ENCODE measurements at regions of chr17 and their contacts with region 1.

Region 1: GRCh38 chr17:48047741-48048383 is at the start of gene NFE2L1:
- DNase-seq: peak; percentile 93 to 100 (median 98)
- ATAC-seq: peak; percentile 95 to 97 (median 96)
- H3K4me3 ChIP-seq: peak within 1 kb of the TSS; percentile 86 to 88
- H3K4me3 Mint-ChIP-seq: peak within 1 kb of the TSS; percentile 76 to 97 (median 90)
- H3K27ac ChIP-seq: peak within 1 kb of the TSS; percentile 92
- H3K27ac Mint-ChIP-seq: peak within 1 kb of the TSS; percentile 99
- H3K4me1 ChIP-seq: peaks cover 17 to 56% of the 10 kb centered on the region in 2 experiments
- H3K4me1 Mint-ChIP-seq: peaks cover 56 to 62% (median 58%) of the 10 kb centered on the region in 3 donors
- H3K27me3 ChIP-seq: no peaks in the 10 kb centered on the region
- H3K27me3 Mint-ChIP-seq: no peaks in the 10 kb centered on the region
- total RNA-seq, gene NFE2L1: 30.3 to 61.6 (median 43.9) TPM

Region 2: GRCh38 chr17:48024937-48025906 is 22.6 kb before region 1 on chr17:
- CTCF ChIA-PET with region 1: interaction called, 3 to 10 read pairs
- POLR2A ChIA-PET with region 1: no interaction called
- DNase-seq: peak; percentile 92 to 99 (median 97)
- ATAC-seq: peak; percentile 90 to 95 (median 92)
- H3K4me3 ChIP-seq: peak overlapping the region; percentile 49 to 84
- H3K4me3 Mint-ChIP-seq: peak overlapping the region; percentile 79 to 90 (median 86)
- H3K27ac ChIP-seq: no peak overlapping the region
- H3K27ac Mint-ChIP-seq: peak overlapping the region; percentile 81 to 90
- H3K4me1 ChIP-seq: peaks cover 20 to 36% of the 10 kb centered on the region in 2 experiments
- H3K4me1 Mint-ChIP-seq: peaks cover 28 to 35% (median 32%) of the 10 kb centered on the region in 3 donors
- H3K27me3 ChIP-seq: peaks cover 0 to 68% of the 10 kb centered on the region in 2 experiments
- H3K27me3 Mint-ChIP-seq: peaks cover 31 to 34% of the 10 kb centered on the region in 2 donors

Region 3: DNA sequence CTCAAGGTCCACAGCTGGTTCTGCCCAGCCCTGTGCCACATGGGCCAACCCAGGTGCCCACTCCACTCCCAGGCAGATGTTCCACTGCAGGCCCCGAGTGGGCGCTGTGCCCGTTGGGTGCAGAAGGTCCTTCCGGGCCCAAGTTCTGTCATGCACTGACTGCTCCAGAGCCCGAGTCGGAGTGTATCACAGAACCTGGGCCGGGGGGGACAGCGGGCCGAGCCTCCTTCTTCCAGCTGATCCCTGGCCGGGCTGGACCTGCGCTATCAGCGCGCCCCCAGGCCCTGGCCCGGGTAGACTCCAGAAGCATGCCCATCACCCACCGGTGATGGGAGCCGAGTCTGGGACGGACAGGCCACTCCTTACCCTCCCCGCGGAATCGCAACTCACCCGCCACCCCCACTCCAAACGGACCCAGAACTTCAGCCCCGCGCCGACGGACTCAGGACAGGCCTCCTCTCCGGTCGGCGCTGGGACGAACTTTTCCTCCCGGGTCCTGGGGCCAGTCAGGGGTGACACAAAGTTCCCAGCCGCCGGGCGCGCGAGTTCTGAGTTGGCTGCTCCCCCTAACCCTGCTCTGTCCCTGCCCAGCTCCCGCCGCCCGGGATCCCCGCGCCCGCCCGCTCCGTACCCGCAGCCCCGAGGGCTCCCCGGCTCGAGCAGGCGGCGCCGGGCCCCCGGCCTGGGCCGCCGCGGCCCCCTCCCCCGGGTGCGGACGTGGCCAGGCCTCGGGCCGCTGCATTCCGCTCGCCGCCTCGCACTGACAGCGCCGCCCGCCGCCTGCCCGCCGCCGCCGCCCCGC is 10.6 kb before region 1 on chr17 and contains the start of gene COPZ2:
- CTCF ChIA-PET with region 1: interaction called in 1 of 2 experiments, 13 read pairs
- POLR2A ChIA-PET with region 1: interaction called in 1 of 2 experiments, 3 read pairs
- DNase-seq: peak in 34 of 35 experiments; percentile 32 to 78 (median 61)
- ATAC-seq: peak; percentile 93 to 96 (median 96)
- H3K4me3 ChIP-seq: peak within 1 kb of the TSS; percentile 75 to 78
- H3K4me3 Mint-ChIP-seq: peak within 1 kb of the TSS; percentile 78 to 86 (median 81)
- H3K27ac ChIP-seq: no peak within 1 kb of the TSS
- H3K27ac Mint-ChIP-seq: no peak within 1 kb of the TSS
- H3K4me1 ChIP-seq: peaks cover 2 to 16% of the 10 kb centered on the region in 2 experiments
- H3K4me1 Mint-ChIP-seq: peaks cover 5 to 7% (median 6%) of the 10 kb centered on the region in 3 donors
- H3K27me3 ChIP-seq: peaks cover 0 to 60% of the 10 kb centered on the region in 2 experiments
- H3K27me3 Mint-ChIP-seq: peaks cover 18 to 32% of the 10 kb centered on the region in 2 donors
- total RNA-seq, gene COPZ2: 1.2 to 2.6 (median 1.9) TPM

Region 4: DNA sequence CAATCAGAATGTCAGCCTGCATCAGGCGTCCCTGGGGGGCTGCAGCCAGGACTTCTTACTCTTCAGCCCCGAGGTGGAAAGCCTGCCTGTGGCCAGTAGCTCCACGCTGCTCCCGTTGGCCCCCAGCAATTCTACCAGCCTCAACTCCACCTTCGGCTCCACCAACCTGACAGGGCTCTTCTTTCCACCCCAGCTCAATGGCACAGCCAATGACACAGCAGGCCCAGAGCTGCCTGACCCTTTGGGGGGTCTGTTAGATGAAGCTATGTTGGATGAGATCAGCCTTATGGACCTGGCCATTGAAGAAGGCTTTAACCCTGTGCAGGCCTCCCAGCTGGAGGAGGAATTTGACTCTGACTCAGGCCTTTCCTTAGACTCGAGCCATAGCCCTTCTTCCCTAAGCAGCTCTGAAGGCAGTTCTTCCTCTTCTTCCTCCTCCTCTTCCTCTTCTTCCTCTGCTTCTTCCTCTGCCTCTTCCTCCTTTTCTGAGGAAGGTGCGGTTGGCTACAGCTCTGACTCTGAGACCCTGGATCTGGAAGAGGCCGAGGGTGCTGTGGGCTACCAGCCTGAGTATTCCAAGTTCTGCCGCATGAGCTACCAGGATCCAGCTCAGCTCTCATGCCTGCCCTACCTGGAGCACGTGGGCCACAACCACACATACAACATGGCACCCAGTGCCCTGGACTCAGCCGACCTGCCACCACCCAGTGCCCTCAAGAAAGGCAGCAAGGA is 10.7 kb after region 1 on chr17:
- CTCF ChIA-PET with region 1: no interaction called
- POLR2A ChIA-PET with region 1: no interaction called
- DNase-seq: no peak
- ATAC-seq: no peak
- H3K4me3 ChIP-seq: no peak overlapping the region
- H3K4me3 Mint-ChIP-seq: no peak overlapping the region
- H3K27ac ChIP-seq: no peak overlapping the region
- H3K27ac Mint-ChIP-seq: no peak overlapping the region
- H3K4me1 ChIP-seq: peaks cover 0 to 14% of the 10 kb centered on the region in 2 experiments
- H3K4me1 Mint-ChIP-seq: peaks cover 16 to 25% (median 18%) of the 10 kb centered on the region in 3 donors
- H3K27me3 ChIP-seq: no peaks in the 10 kb centered on the region
- H3K27me3 Mint-ChIP-seq: no peaks in the 10 kb centered on the region

Region 5: GRCh38 chr17:48074315-48075081 is 26.6 kb after region 1 on chr17:
- CTCF ChIA-PET with region 1: interaction called, 3 to 9 read pairs
- POLR2A ChIA-PET with region 1: interaction called in 1 of 2 experiments, 11 read pairs
- DNase-seq: peak; percentile 32 to 84 (median 68)
- ATAC-seq: peak; percentile 71 to 81 (median 76)
- H3K4me3 ChIP-seq: no peak overlapping the region
- H3K4me3 Mint-ChIP-seq: no peak overlapping the region
- H3K27ac ChIP-seq: no peak overlapping the region
- H3K27ac Mint-ChIP-seq: no peak overlapping the region
- H3K4me1 ChIP-seq: no peaks in the 10 kb centered on the region
- H3K4me1 Mint-ChIP-seq: no peaks in the 10 kb centered on the region
- H3K27me3 ChIP-seq: no peaks in the 10 kb centered on the region
- H3K27me3 Mint-ChIP-seq: no peaks in the 10 kb centered on the region

Region 6: DNA sequence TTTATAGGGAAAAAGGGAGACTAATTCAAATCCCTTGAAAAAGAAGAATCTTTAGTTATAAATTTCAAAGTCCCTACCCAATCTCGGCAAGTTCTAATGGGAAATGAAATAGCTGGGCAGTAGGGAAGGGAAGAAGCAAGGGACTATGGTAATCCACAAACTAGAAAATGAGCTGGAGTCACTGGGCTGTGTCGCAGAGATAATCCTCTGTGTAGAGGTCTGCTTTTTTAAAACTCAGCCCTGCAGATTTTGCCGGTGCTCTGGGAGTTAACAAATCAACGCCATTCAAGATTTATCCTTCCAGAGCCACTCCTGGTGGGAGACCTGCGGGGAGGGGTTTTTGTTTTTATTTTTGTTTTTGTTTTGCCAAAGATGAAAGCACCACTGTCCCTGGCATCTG is 80.5 kb after region 1 on chr17:
- CTCF ChIA-PET with region 1: no interaction called
- POLR2A ChIA-PET with region 1: no interaction called
- DNase-seq: no peak
- ATAC-seq: no peak
- H3K4me3 ChIP-seq: no peak overlapping the region
- H3K4me3 Mint-ChIP-seq: no peak overlapping the region
- H3K27ac ChIP-seq: no peak overlapping the region
- H3K27ac Mint-ChIP-seq: no peak overlapping the region
- H3K4me1 ChIP-seq: no peaks in the 10 kb centered on the region
- H3K4me1 Mint-ChIP-seq: peaks cover 0 to 3% (median 0%) of the 10 kb centered on the region in 3 donors
- H3K27me3 ChIP-seq: no peaks in the 10 kb centered on the region
- H3K27me3 Mint-ChIP-seq: no peaks in the 10 kb centered on the region

Region 7: GRCh38 chr17:48153691-48154358 is 106.0 kb after region 1 on chr17:
- CTCF ChIA-PET with region 1: no interaction called
- POLR2A ChIA-PET with region 1: no interaction called
- DNase-seq: no peak
- ATAC-seq: no peak
- H3K4me3 ChIP-seq: no peak overlapping the region
- H3K4me3 Mint-ChIP-seq: no peak overlapping the region
- H3K27ac ChIP-seq: no peak overlapping the region
- H3K27ac Mint-ChIP-seq: no peak overlapping the region
- H3K4me1 ChIP-seq: no peaks in the 10 kb centered on the region
- H3K4me1 Mint-ChIP-seq: no peaks in the 10 kb centered on the region
- H3K27me3 ChIP-seq: no peaks in the 10 kb centered on the region
- H3K27me3 Mint-ChIP-seq: no peaks in the 10 kb centered on the region

Region 8: DNA sequence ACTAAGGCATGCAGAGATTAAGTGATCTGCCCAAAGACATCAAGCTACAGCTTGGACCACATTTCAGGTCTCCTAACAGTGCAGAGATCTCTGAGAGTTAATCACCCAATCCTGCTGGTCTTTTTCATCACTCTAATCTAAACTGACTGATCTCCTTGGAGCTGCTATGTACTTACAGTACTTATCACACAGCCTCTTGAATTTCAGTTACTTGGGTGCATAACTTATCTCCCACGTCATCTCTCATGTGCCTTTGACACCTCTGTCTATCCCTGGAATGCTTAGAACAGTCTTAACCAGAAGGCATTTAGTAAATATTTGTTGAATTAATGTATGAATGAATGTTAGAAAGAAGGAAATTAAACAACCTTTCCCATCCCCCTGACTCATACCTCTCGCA is 198.8 kb after region 1 on chr17:
- CTCF ChIA-PET with region 1: no interaction called
- POLR2A ChIA-PET with region 1: no interaction called
- DNase-seq: no peak
- ATAC-seq: no peak
- H3K4me3 ChIP-seq: no peak overlapping the region
- H3K4me3 Mint-ChIP-seq: no peak overlapping the region
- H3K27ac ChIP-seq: no peak overlapping the region
- H3K27ac Mint-ChIP-seq: peak overlapping the region in 1 of 2 donors; percentile 11
- H3K4me1 ChIP-seq: peaks cover 8 to 10% of the 10 kb centered on the region in 2 experiments
- H3K4me1 Mint-ChIP-seq: peaks cover 51 to 58% (median 53%) of the 10 kb centered on the region in 3 donors
- H3K27me3 ChIP-seq: no peaks in the 10 kb centered on the region
- H3K27me3 Mint-ChIP-seq: no peaks in the 10 kb centered on the region

Measured in T-cell (primary cell).